ENCODE measurements at regions of chr17 and their contacts with region 1.

Region 1: GRCh38 chr17:716238-716637 is 1.6 kb upstream of the VPS53 start:
- DNase-seq: no peak
- ATAC-seq: no peak
- H3K4me3 ChIP-seq: no peak overlapping the region
- H3K4me3 Mint-ChIP-seq: peak overlapping the region; percentile 45
- H3K27ac ChIP-seq: no peak overlapping the region
- H3K27ac Mint-ChIP-seq: no peak overlapping the region
- H3K4me1 ChIP-seq: peaks cover 4 to 20% of the 10 kb centered on the region in 2 donors
- H3K4me1 Mint-ChIP-seq: peaks cover 24% of the 10 kb centered on the region
- H3K27me3 ChIP-seq: no peaks in the 10 kb centered on the region
- H3K27me3 Mint-ChIP-seq: no peaks in the 10 kb centered on the region
- CTCF ChIP-seq: no peak

Region 2: DNA sequence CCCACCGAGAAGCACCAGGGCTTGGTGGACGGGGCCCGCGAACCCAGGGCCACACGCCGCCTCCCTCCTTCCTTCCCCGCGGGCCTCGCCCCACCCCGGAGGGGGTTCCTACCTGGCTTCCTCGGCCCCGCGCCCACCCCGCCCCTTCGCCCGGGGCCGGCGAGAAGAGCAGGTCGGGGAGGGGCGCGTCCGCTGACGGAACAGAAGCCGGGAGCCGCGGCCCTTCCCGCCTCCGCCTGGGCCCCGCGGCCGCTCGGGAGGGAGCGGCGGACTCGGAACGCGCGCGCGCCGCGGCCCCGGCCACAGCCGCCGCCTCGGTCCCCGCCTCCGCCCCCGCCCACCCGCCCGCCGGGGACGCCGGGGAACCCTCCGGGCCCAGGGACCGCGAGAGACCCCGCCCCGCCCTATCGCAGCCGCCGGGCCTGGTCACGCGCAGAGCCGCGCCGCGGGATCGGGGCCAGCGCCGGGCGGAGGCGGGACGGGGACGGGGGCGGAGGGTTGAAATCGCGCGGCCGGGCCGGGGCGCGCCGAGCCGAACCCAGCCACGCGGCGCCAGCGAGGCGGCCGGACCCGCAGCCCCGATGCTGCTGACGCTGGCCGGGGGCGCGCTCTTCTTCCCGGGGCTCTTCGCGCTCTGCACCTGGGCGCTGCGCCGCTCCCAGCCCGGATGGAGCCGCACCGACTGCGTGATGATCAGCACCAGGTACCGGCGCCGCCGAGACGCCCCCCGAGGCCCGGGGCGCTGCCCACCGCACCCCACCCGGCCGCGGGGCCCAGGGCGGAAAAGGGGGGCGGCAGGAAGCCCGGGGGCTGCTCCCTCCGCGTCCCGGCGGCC is 16.0 kb after region 1 on chr17 and contains the start of gene TLCD3A:
- CTCF ChIA-PET with region 1: no interaction called
- POLR2A ChIA-PET with region 1: no interaction called
- intact Hi-C with region 1: loop called (anchors 2 kb)
- DNase-seq: peak; percentile 59
- ATAC-seq: peak; percentile 78
- H3K4me3 ChIP-seq: peak within 1 kb of the TSS in 4 of 5 experiments; percentile 47 to 57 (median 56)
- H3K4me3 Mint-ChIP-seq: peak within 1 kb of the TSS; percentile 88
- H3K27ac ChIP-seq: no peak within 1 kb of the TSS
- H3K27ac Mint-ChIP-seq: peak within 1 kb of the TSS; percentile 79
- H3K4me1 ChIP-seq: peaks cover 9 to 10% of the 10 kb centered on the region in 2 donors
- H3K4me1 Mint-ChIP-seq: peaks cover 10% of the 10 kb centered on the region
- H3K27me3 ChIP-seq: peaks cover 0 to 27% (median 12%) of the 10 kb centered on the region in 4 experiments
- H3K27me3 Mint-ChIP-seq: no peaks in the 10 kb centered on the region
- CTCF ChIP-seq: no peak
- total RNA-seq, gene TLCD3A: 2.4 and 3.4 TPM in 2 replicates

Region 3: GRCh38 chr17:740240-741017 is 24.2 kb after region 1 on chr17:
- CTCF ChIA-PET with region 1: interaction called, 8 read pairs
- POLR2A ChIA-PET with region 1: interaction called, 3 read pairs
- intact Hi-C with region 1: loop called (anchors 1 kb)
- DNase-seq: peak; percentile 91
- ATAC-seq: peak; percentile 94
- H3K4me3 ChIP-seq: peak overlapping the region; percentile 15 to 47 (median 33)
- H3K4me3 Mint-ChIP-seq: peak overlapping the region; percentile 65
- H3K27ac ChIP-seq: peak overlapping the region; percentile 70
- H3K27ac Mint-ChIP-seq: peak overlapping the region; percentile 94
- H3K4me1 ChIP-seq: peaks cover 14 to 18% of the 10 kb centered on the region in 2 donors
- H3K4me1 Mint-ChIP-seq: peaks cover 15% of the 10 kb centered on the region
- H3K27me3 ChIP-seq: no peaks in the 10 kb centered on the region
- H3K27me3 Mint-ChIP-seq: no peaks in the 10 kb centered on the region
- CTCF ChIP-seq: no peak

Region 4: GRCh38 chr17:781805-782731 is 65.8 kb after region 1 on chr17 and contains the starts of genes GLOD4 and MRM3:
- CTCF ChIA-PET with region 1: no interaction called
- POLR2A ChIA-PET with region 1: no interaction called
- intact Hi-C with region 1: loop called (anchors 1 kb)
- DNase-seq: peak; percentile 96
- ATAC-seq: peak; percentile 95
- H3K4me3 ChIP-seq: peak within 1 kb of the TSS; percentile 79 to 100 (median 93)
- H3K4me3 Mint-ChIP-seq: peak within 1 kb of the TSS; percentile 97
- H3K27ac ChIP-seq: peak within 1 kb of the TSS; percentile 83 to 95
- H3K27ac Mint-ChIP-seq: peak within 1 kb of the TSS; percentile 97
- H3K4me1 ChIP-seq: peaks cover 16 to 20% of the 10 kb centered on the region in 2 donors
- H3K4me1 Mint-ChIP-seq: peaks cover 27% of the 10 kb centered on the region
- H3K27me3 ChIP-seq: no peaks in the 10 kb centered on the region
- H3K27me3 Mint-ChIP-seq: no peaks in the 10 kb centered on the region
- CTCF ChIP-seq: no peak
- total RNA-seq, gene GLOD4: 69.3 and 77.4 TPM in 2 replicates
- total RNA-seq, gene MRM3: 20.9 and 28.4 TPM in 2 replicates